ENCODE measurements at regions of chr9 and their contacts with region 1.

Region 1: DNA sequence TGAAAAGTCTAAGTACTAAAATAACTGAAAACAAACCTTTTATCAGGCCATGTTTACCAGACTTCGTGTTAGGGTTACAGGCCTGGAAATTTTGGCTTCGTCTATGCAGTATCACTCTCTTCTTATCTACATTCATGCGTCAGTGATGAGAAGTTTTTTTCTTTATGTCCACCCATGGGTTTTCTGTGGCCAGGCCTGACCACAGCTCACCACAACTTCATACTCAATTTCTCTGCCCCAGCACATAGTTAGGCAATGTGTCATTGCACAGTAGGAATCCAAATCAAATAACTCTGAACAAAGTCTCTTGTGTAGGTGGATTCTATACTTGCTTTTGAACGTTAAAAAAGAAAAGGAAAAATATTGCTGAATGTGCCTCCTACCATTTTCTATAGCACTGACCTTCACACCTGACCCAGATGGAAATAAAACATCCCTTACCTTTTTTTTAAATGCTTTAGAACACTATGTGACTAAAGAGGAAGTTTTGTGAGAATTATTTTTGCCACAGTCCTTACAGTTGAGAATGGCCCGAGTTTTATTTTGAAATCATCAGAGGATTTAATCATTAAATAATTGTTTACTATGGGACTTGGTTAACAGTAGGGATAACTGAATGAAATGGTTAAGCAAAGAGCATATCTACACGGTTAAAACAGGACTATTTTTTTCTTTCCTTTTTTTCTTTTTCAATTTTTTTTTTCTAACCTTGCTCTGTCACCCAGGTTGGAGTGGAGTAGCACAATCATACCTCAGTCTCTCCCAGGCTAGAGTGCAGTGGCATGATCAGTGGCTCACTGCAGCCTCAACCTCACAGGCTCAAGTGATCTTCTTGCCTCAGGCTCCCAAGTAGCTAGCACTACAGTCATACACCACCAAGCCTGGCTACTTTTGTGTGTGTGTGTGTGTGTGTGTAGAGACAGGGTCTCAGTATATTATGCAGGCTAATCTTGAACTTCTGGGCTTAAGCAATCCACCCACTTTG is 1247.0 kb upstream of the ACO1 start:
- DNase-seq: no peak
- ATAC-seq: no peak
- H3K4me3 ChIP-seq: no peak overlapping the region
- H3K4me3 Mint-ChIP-seq: no peak overlapping the region
- H3K27ac ChIP-seq: no peak overlapping the region
- H3K27ac Mint-ChIP-seq: no peak overlapping the region
- H3K4me1 ChIP-seq: no peaks in the 10 kb centered on the region
- H3K4me1 Mint-ChIP-seq: peaks cover 6% of the 10 kb centered on the region
- H3K27me3 ChIP-seq: no peaks in the 10 kb centered on the region
- H3K27me3 Mint-ChIP-seq: no peaks in the 10 kb centered on the region
- CTCF ChIP-seq: no peak

Region 2: DNA sequence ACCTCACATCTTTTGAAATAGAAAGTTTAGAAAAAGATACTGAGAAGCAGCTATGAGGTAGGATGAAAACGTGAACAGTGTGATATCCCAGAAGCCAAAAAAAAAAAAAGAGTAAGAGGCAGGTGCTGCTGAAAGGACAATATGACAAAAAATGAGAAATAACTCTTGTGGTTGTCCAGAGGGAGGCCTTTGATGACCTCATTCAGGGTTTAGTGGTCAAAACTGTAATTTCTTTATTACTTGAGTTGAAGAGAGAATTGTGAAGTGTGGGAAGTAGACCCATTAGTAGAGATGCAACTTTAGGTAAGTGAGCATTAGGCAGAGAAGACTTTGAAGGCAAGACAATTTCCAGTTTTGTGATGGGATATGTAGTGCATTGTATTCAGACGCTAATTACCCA is 59.3 kb before region 1 on chr9:
- CTCF ChIA-PET with region 1: no interaction called
- POLR2A ChIA-PET with region 1: no interaction called
- intact Hi-C with region 1: loop called in 1 of 2 experiments (anchors 10 kb)
- DNase-seq: no peak
- ATAC-seq: no peak
- H3K4me3 ChIP-seq: no peak overlapping the region
- H3K4me3 Mint-ChIP-seq: no peak overlapping the region
- H3K27ac ChIP-seq: no peak overlapping the region
- H3K27ac Mint-ChIP-seq: no peak overlapping the region
- H3K4me1 ChIP-seq: no peaks in the 10 kb centered on the region
- H3K4me1 Mint-ChIP-seq: no peaks in the 10 kb centered on the region
- H3K27me3 ChIP-seq: no peaks in the 10 kb centered on the region
- H3K27me3 Mint-ChIP-seq: no peaks in the 10 kb centered on the region
- CTCF ChIP-seq: no peak

Region 3: GRCh38 chr9:31153250-31153840 is 15.9 kb after region 1 on chr9:
- CTCF ChIA-PET with region 1: no interaction called
- POLR2A ChIA-PET with region 1: no interaction called
- intact Hi-C with region 1: loop called in 1 of 2 experiments (anchors 2 kb)
- DNase-seq: peak in 2 of 9 experiments; percentile 4
- ATAC-seq: peak; percentile 42
- H3K4me3 ChIP-seq: no peak overlapping the region
- H3K4me3 Mint-ChIP-seq: no peak overlapping the region
- H3K27ac ChIP-seq: no peak overlapping the region
- H3K27ac Mint-ChIP-seq: no peak overlapping the region
- H3K4me1 ChIP-seq: no peaks in the 10 kb centered on the region
- H3K4me1 Mint-ChIP-seq: peaks cover 7% of the 10 kb centered on the region
- H3K27me3 ChIP-seq: no peaks in the 10 kb centered on the region
- H3K27me3 Mint-ChIP-seq: no peaks in the 10 kb centered on the region
- CTCF ChIP-seq: no peak

Measured in CD8-positive, alpha-beta T cell (primary cell).